Psoas muscle (tissue), 8 donors: ENCODE measurements at regions of chr20 and their contacts with region 1.

Region 1: GRCh38 chr20:48904365-48905296 is 16.9 kb upstream of the ARFGEF2 start:
- DNase-seq: peak in 1 of 2 donors; percentile 36
- ATAC-seq: peak; percentile 53 to 79 (median 66)
- H3K4me3 ChIP-seq: no peak overlapping the region
- H3K27ac ChIP-seq: no peak overlapping the region
- H3K4me1 ChIP-seq: no peaks in the 10 kb centered on the region
- H3K27me3 ChIP-seq: no peaks in the 10 kb centered on the region
- CTCF ChIP-seq: peak; percentile 87

Region 2: DNA sequence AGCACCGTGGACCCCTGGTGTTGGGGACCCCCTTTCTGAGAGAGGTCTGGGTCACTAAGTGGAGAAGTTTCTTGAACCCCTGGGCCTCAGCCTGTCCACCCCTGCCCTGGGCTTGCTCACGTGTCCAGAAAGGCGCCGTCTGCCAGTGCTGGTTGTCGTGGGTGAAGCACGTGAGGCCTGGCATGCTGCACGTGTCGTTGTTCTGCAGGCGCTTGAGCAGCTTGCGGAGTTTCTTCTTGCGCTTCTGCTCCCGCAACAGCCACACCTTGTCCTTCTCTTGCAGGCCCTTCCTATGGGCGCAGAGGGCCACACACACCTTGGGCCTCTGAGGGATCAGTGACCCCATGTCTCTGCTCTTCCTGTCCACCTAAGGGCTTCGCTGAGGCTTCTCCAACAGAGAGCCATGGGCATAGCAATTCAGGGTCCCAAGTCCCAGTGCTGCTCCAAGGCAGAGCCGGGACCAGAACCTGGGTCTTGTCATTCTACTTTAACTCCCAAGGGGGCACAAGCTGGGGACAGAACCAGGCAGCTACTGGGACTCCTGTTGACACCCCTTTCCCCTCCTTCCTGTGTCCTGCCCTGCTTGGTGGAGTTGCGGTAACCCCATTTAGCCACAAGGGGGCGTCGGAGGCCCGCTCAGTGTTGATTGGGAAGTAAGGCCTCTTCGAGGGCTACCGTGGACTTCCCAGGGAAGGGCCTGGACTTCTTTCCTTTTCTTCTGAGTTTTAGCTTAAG is 1241.1 kb before region 1 on chr20:
- intact Hi-C with region 1: loop called in 1 of 2 experiments (anchors 10 kb)
- DNase-seq: peak; percentile 74 to 87
- ATAC-seq: peak; percentile 69 to 82 (median 78)
- H3K4me3 ChIP-seq: no peak overlapping the region
- H3K27ac ChIP-seq: no peak overlapping the region
- H3K4me1 ChIP-seq: no peaks in the 10 kb centered on the region
- H3K27me3 ChIP-seq: no peaks in the 10 kb centered on the region
- CTCF ChIP-seq: peak; percentile 94

Region 3: GRCh38 chr20:48657475-48658470 is 246.9 kb before region 1 on chr20:
- intact Hi-C with region 1: loop called (anchors 1 to 2 kb)
- DNase-seq: peak; percentile 62 to 74
- ATAC-seq: peak; percentile 86 to 94 (median 91)
- H3K4me3 ChIP-seq: no peak overlapping the region
- H3K27ac ChIP-seq: no peak overlapping the region
- H3K4me1 ChIP-seq: no peaks in the 10 kb centered on the region
- H3K27me3 ChIP-seq: no peaks in the 10 kb centered on the region
- CTCF ChIP-seq: peak; percentile 96

Region 4: GRCh38 chr20:48828022-48828743 is 76.4 kb before region 1 on chr20:
- intact Hi-C with region 1: loop called (anchors 5 kb)
- DNase-seq: peak; percentile 84 to 86
- ATAC-seq: peak; percentile 77 to 83 (median 82)
- H3K4me3 ChIP-seq: peak overlapping the region; percentile 73
- H3K27ac ChIP-seq: peak overlapping the region; percentile 85
- H3K4me1 ChIP-seq: peaks cover 7% of the 10 kb centered on the region
- H3K27me3 ChIP-seq: peaks cover 0 to 5% (median 0%) of the 10 kb centered on the region in 3 donors
- CTCF ChIP-seq: peak; percentile 20